Posterior vena cava (tissue), 2 donors: ENCODE measurements at regions of chr10 and their contacts with region 1.

Region 1: GRCh38 chr10:44902941-44903545 is 8.1 kb upstream of the TMEM72 start:
- DNase-seq: peak; percentile 31

Region 2: GRCh38 chr10:44922796-44923545 is 19.9 kb after region 1 on chr10:
- intact Hi-C with region 1: loop called in 1 of 2 experiments (anchors 2 kb)
- DNase-seq: no peak

Region 3: GRCh38 chr10:45569471-45569870 is 666.4 kb after region 1 on chr10:
- intact Hi-C with region 1: no loop called
- DNase-seq: no peak